Sigmoid colon (tissue), 7 donors: ENCODE measurements at regions of chr3 and their contacts with region 1.

Region 1: GRCh38 chr3:108662130-108662738 is 72.7 kb downstream of the DZIP3 start:
- DNase-seq: no peak
- H3K4me3 ChIP-seq: no peak overlapping the region
- H3K27ac ChIP-seq: no peak overlapping the region
- H3K4me1 ChIP-seq: peaks cover 0 to 4% (median 0%) of the 10 kb centered on the region in 4 donors
- H3K27me3 ChIP-seq: no peaks in the 10 kb centered on the region
- CTCF ChIP-seq: peak in 3 of 4 experiments; percentile 52 to 81 (median 58)
- EP300 ChIP-seq: no peak
- POLR2A ChIP-seq: no peak

Region 2: DNA sequence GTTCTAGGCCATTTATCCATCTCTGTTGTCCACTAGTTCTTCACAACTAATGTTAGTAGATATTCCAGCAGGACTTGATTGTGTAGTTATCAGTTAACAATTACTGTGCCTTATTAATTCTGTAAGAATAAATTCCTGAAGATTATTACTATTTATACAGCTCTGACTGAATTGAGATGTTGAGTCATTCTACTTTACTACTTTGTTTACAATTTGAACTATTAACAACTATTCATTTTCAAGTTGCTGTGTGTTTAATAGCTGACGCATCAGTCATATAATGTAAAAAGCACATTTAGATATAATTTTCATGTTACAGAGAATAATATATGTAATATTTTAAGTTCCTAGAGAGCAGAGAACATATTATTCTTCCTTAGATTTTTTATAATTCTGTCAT is 51.6 kb before region 1 on chr3:
- intact Hi-C with region 1: no loop called
- DNase-seq: no peak
- H3K4me3 ChIP-seq: no peak overlapping the region
- H3K27ac ChIP-seq: no peak overlapping the region
- H3K4me1 ChIP-seq: no peaks in the 10 kb centered on the region
- H3K27me3 ChIP-seq: no peaks in the 10 kb centered on the region
- CTCF ChIP-seq: no peak
- EP300 ChIP-seq: no peak
- POLR2A ChIP-seq: no peak

Region 3: DNA sequence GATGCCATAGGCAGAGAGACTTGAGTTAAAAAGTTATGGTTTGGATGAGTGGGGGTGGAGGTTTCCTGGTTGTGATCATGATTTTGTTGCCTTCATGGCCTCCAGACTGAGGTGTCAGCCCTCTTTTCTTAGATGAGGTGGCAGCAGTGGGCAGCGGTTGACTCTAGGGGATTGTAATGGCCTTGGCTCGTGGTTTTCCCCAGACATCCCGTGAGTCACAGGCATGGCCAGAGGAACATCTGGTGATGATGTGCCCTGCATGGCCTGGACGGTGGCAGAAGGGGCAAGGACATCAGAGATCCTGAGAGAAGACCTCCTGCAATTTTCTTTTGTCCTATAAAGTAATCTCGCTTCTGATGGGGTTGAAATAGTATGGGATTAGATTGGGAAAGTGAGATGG is 82.5 kb after region 1 on chr3:
- intact Hi-C with region 1: no loop called
- DNase-seq: no peak
- H3K4me3 ChIP-seq: no peak overlapping the region
- H3K27ac ChIP-seq: no peak overlapping the region
- H3K4me1 ChIP-seq: no peaks in the 10 kb centered on the region
- H3K27me3 ChIP-seq: no peaks in the 10 kb centered on the region
- CTCF ChIP-seq: no peak
- EP300 ChIP-seq: no peak
- POLR2A ChIP-seq: no peak

Region 4: GRCh38 chr3:108914774-108915641 is 252.8 kb after region 1 on chr3:
- intact Hi-C with region 1: loop called (anchors 2 kb)
- DNase-seq: no peak
- H3K4me3 ChIP-seq: no peak overlapping the region
- H3K27ac ChIP-seq: no peak overlapping the region
- H3K4me1 ChIP-seq: no peaks in the 10 kb centered on the region
- H3K27me3 ChIP-seq: no peaks in the 10 kb centered on the region
- CTCF ChIP-seq: peak in 3 of 4 experiments; percentile 55 to 66 (median 55)
- EP300 ChIP-seq: no peak
- POLR2A ChIP-seq: no peak

Region 5: DNA sequence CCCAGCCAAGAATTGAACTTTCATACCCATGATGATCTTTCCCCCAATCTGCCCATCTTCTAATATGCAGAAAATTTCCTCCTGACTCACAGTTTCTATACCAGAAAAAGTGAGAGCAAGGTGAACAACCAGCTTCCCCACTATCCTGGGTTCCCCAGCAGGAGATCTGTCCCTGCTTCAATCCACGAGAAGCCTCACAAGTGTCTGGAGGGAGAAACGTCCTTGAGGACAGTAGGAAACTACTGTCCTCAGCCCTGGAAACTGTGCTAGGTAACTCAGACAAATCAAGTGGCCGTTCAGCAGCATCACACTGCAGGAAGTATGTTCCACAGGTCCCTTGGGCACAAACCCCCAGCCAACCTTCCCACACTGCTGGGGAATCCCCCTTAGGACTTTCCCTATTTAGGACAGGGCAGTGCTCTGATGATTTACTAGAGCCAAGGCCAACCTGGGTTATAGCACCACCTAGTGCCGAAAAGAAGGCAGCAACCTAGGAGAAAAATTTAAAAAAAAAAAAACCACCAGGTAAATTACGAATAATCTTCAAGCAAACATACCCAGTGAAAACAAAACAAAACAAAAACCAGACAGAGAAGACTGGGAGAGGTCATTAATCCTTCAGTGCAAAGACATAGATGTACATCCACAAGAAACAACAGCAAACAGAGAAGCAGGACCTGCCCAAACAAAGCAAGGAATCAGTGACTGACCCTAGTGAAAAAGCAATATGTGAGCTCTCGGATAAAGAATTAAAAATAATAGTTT is 419.7 kb after region 1 on chr3:
- intact Hi-C with region 1: loop called (anchors 10 kb)
- DNase-seq: no peak
- H3K4me3 ChIP-seq: no peak overlapping the region
- H3K27ac ChIP-seq: no peak overlapping the region
- H3K4me1 ChIP-seq: no peaks in the 10 kb centered on the region
- H3K27me3 ChIP-seq: no peaks in the 10 kb centered on the region
- CTCF ChIP-seq: peak in 2 of 4 experiments; percentile 6 to 31
- EP300 ChIP-seq: no peak
- POLR2A ChIP-seq: no peak